Dorsolateral prefrontal cortex (tissue), 120 donors: ENCODE measurements at regions of chr13 and their contacts with region 1.

Region 1: GRCh38 chr13:42039946-42040729 is 8.3 kb upstream of the DGKH start:
- DNase-seq: peak; percentile 60 to 89 (median 81)
- H3K4me3 ChIP-seq: peak overlapping the region; percentile 56 to 97 (median 86)
- H3K27ac ChIP-seq: peak overlapping the region; percentile 7 to 97 (median 92)
- H3K27me3 ChIP-seq: no peaks in the 10 kb centered on the region
- CTCF ChIP-seq: peak in 13 of 56 donors; percentile 5 to 35 (median 19)

Region 2: DNA sequence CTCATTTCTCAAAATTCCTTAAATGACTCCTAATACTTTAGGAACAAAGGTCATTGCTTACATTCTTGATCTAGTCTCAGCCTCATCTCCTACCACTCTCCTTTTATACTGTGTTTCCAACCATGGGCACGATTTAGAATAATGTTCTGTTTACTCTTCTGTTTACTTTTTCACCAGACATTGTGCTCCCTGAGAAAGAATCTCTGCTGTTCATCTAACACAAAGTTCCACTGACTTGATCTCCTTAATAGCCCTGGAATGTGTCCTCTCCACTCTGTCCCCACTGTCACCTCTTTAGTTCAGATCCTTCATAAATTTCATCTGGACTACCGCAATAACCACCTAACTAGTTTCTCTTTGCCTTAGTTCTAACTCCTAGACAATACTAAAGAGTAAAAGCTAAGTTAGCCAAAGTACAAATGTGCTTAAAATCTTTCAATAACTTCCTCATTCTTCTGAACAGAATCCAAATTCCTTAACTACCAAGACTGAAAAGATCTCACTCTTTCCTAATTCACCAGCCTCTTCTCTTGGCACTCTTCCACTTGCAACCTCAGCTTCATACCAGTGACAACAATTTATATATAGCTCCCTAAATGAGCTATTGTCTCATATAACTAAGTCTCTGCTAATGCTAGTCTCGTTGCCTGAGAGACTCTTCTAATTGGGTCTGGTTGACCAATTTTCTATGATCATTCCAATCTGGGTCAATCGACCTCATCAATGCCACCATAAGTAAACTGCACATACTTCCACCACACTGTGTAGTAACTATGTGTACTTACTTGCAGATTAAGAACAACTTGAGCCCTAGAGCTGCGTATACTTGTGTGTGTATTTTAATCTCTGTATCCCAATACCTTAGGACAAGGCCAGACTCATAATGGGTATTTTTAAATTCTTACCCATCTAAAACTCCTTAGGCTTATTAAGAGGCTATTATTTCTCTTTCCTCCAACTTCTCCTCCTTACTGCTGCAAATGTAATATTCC is 259.1 kb before region 1 on chr13:
- intact Hi-C with region 1: loop called in 1 of 2 experiments (anchors 10 kb)
- DNase-seq: no peak
- H3K4me3 ChIP-seq: no peak overlapping the region
- H3K27ac ChIP-seq: peak overlapping the region in 3 of 59 donors; percentile 35 to 52 (median 48)
- H3K27me3 ChIP-seq: no peaks in the 10 kb centered on the region
- CTCF ChIP-seq: no peak

Region 3: GRCh38 chr13:41960639-41961465 is 79.3 kb before region 1 on chr13 and contains the start of gene VWA8:
- intact Hi-C with region 1: loop called in 1 of 2 experiments (anchors 2 kb)
- DNase-seq: peak; percentile 41 to 85 (median 70)
- H3K4me3 ChIP-seq: peak within 1 kb of the TSS; percentile 50 to 98 (median 89)
- H3K27ac ChIP-seq: peak within 1 kb of the TSS in 58 of 59 donors; percentile 14 to 93 (median 78)
- H3K27me3 ChIP-seq: no peaks in the 10 kb centered on the region
- CTCF ChIP-seq: peak in 12 of 56 donors; percentile 2 to 40 (median 18)
- total RNA-seq, gene VWA8: 24.4 to 44.0 (median 32.0) TPM

Region 4: DNA sequence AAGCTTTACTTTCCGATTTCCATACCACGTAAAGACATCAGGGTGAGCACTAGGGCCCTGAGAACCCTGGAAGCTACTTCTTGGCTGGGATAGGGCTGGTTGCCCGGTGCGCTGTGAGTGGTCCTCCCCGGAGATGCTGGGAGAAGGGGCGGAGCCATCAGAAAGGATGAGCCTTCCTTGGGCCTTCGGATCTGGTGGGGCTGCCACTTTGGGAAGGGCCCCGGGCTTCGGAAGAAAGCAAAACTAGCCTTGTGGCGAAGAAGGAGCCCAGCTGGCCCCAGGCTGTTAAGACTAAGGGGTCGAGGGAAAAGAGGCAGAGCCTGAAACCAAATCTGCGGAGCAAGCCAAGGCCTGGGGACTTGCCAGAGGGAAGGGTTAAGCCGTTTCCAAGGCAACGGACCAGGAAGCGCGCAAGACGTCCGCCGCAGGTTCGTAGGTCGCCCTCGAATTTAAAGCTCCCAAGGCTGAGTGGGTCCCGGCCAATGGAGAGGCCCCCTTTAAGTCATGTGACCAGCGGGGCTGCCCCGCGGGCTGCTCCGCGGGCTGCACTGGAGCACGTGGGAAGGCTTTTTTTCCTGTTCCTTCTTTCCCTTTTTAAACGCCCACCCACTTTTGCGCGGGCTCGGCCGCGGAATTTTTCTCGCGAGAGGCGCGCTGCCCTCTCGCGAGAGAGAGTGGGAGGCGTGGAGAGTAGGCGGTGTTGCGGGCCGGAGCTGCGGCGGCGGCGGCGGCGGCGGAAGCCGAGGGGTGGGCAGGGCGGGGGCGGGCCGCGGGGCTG is 231.4 kb after region 1 on chr13:
- intact Hi-C with region 1: loop called in 1 of 2 experiments (anchors 2 kb)
- DNase-seq: peak; percentile 96 to 98 (median 98)
- H3K4me3 ChIP-seq: peak overlapping the region; percentile 62 to 100 (median 94)
- H3K27ac ChIP-seq: peak overlapping the region; percentile 20 to 98 (median 93)
- H3K27me3 ChIP-seq: no peaks in the 10 kb centered on the region
- CTCF ChIP-seq: peak in 23 of 56 donors; percentile 2 to 49 (median 20)